ENCODE measurements at regions of chr3 and their contacts with region 1.

Region 1: GRCh38 chr3:2823031-2823430 is 287.1 kb downstream of the IL5RA start:
- DNase-seq: no peak

Region 2: DNA sequence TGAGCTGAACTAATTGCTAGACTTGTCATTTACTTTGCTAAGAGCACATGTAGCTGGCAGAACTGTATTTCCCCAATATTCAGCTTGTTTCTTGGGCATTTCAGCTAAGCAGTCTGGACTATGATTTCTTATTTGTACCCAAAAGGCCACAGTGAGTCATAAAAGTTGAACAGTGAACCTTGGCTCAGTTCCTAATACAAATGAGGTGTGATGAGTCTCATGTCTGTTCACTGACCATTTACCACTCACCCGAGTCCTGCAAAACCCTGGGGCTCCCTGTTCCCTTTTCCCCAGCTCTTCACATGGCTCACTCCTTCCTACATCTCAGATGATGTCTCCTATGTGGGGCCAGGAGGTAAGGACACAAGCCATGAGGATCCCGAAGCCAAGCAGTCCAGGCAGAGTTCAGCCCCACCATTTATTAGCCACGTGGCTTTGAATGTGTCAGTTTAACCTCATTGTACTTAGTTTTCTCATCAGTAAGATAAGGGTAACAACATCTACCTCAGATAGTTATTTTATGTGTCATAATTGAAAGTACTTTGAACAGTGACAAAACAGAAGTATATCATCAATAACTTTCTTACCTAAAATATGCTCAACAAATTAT is 47.8 kb after region 1 on chr3:
- intact Hi-C with region 1: loop called in 1 of 2 experiments (anchors 1 kb)
- DNase-seq: no peak

Region 3: DNA sequence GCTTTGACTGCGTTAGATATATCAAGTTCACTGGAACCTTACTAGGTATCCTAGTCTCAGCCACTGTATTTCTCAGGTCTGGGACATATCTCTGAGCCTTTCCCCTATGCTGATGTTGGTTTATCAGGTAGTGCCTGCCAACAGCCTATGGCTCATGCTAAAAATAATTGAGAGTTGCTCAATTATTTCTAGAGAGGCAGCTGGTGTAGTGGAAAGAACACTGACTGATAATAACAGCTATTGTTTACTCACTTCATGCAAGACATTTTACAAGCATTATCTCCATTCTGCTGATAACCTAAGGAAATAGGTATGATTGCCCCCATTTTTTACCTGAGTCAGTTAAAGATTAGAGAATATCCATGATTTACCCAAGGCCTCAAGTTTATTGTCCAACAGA is 1207.6 kb after region 1 on chr3:
- intact Hi-C with region 1: no loop called
- DNase-seq: no peak

Measured in posterior vena cava (tissue), 2 donors.